ENCODE measurements at regions of chr10 and their contacts with region 1.

Region 1: DNA sequence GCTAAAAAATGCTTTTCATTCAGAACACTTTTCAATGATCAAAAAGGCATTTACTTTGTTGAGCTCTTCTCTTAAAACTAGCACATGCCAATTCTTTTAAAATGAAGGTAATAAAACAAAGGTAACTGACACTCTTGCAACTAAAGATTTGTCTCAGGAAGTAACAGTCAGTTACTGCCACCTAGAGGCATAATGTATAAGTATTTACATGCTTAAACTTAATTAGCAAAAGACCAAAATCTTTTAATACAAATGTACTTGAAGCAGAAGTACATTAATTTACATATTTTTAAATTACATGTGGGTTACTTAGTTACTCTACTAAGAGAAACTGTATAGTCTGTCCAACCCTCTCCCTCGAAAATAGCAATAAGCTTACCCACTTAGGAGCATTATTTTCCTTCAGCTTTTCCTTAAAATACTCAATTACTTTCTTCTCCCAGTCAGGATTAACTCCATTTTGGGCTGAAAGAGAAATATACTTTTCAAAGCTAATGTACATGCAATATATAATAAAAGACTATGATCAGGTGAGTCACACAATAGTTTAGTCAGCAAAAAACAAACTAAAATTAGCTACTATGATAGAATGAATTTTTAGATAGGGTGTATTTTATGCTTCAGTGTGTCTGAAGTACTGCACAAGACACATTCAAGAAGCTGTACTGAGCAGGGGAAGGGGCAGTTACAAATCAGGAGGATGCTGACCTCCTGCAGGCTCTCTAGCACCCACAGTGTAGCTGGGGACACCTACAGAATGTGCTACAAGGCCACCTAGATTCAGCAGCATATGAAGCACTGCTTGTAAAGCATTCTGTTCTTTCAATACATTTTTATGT is 13.0 kb downstream of the MCMBP start:
- DNase-seq: peak; percentile 28

Region 2: DNA sequence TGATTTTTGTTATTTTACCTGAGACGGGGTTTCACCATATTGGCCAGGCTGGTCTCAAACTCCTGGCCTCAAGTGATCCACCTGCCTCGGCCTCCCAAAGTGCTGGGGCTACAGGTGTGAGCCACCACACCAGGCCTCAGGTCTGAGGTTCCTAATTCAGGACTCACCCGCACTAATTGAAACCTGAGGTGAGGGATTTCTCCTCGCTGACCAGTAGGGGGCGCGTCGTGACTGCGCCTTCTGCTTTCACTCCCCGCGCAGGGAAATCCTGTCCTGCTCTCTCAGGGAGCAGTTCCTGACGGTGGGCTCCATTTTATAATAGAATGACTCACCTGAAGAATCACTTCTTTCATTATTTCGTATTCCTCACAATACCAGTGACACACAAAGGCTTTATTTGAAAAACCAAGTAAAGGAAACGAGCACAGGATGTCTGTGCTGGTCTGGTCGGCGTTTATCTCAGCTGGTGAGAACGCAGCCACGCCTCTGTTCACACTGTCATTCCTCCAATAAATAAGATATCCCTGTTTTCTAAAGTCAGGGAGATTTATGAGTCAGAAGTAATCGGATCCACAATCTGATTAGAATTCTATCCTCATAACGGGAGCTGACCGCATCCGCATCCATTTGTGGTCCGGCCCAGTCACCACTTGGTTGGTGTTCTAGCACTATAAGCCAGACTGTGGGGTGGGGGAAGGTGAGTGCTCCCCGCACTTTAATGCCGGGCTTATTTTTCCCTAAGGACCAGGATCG is 173.0 kb before region 1 on chr10:
- CTCF ChIA-PET with region 1: interaction called, 10 read pairs
- POLR2A ChIA-PET with region 1: no interaction called
- DNase-seq: peak; percentile 91

Region 3: GRCh38 chr10:119750391-119751230 is 109.0 kb before region 1 on chr10:
- CTCF ChIA-PET with region 1: interaction called, 17 read pairs
- POLR2A ChIA-PET with region 1: no interaction called
- DNase-seq: peak; percentile 79

Region 4: GRCh38 chr10:119872860-119873681 is 13.4 kb after region 1 on chr10:
- CTCF ChIA-PET with region 1: interaction called, 16 read pairs
- POLR2A ChIA-PET with region 1: interaction called, 16 read pairs
- DNase-seq: peak; percentile 90